Endothelial cell of umbilical vein (primary cell): ENCODE measurements at regions of chr14 and their contacts with region 1.

Region 1: GRCh38 chr14:68970038-68970612 is 9.0 kb downstream of the ACTN1 start:
- DNase-seq: peak; percentile 41
- H3K4me3 ChIP-seq: no peak overlapping the region
- H3K27ac ChIP-seq: peak overlapping the region; percentile 62
- H3K4me1 ChIP-seq: peaks cover 65% of the 10 kb centered on the region
- H3K27me3 ChIP-seq: no peaks in the 10 kb centered on the region
- CTCF ChIP-seq: no peak
- POLR2A ChIP-seq: no peak

Region 2: DNA sequence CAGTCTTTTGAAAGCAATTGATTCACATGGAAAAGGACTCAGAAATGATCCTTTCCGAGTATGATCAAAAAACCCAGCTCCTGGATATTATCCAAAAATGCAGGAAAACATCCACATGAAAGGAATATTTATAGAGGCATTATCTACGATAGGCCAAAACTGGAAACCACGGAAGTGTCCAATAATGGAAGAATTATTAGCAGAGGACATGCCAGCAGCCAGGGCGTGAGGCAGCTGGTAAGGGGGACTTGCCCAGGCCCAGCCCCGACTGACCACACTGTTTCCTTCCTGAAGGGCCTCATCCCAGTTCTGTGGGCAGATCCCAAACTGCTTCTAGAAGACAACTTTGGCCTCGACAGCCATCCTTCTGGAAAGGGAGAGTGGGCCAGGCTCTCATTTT is 11.6 kb before region 1 on chr14:
- CTCF ChIA-PET with region 1: interaction called, 11 read pairs
- POLR2A ChIA-PET with region 1: interaction called, 4 read pairs
- dilution Hi-C with region 1: no loop called
- intact Hi-C with region 1: loop called (anchors 1 kb)
- DNase-seq: peak; percentile 89
- H3K4me3 ChIP-seq: no peak overlapping the region
- H3K27ac ChIP-seq: peak overlapping the region; percentile 56
- H3K4me1 ChIP-seq: peaks cover 62% of the 10 kb centered on the region
- H3K27me3 ChIP-seq: no peaks in the 10 kb centered on the region
- CTCF ChIP-seq: no peak
- POLR2A ChIP-seq: no peak